Naive thymus-derived CD4-positive, alpha-beta T cell (primary cell): ENCODE measurements at regions of chr10 and their contacts with region 1.

Region 1: DNA sequence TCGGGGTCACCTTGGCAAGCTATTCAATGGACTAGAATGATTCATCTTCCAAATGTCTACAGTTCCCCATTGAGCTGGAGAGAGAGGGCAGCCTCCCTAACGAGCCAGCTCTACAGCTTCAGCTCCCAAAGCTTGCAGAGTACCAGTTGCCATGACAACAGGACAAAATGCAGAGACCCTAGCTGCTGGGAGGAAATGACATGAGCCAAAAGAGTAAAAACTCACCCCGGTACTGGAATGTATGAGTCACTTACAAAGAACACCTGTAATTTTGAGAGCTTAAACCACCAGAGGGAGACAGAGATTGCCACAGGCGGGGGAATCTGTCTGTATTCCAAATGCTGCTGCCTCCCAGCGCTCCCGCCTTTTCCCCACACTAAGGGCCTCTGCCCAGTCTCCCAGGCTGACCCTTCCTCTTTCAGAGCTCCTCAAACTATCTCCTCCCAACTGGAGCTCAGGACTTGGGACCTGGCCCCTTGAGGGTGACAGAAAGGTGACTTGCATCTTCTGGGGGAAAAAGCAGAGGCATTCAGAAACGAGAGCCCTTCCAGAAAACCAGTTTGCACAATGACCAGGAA is 95.5 kb downstream of the CUL2 start:
- DNase-seq: peak in 8 of 9 donors; percentile 18 to 78 (median 50)
- ATAC-seq: peak; percentile 71
- H3K4me3 ChIP-seq: no peak overlapping the region
- H3K4me3 Mint-ChIP-seq: no peak overlapping the region
- H3K27ac ChIP-seq: no peak overlapping the region
- H3K27ac Mint-ChIP-seq: peak overlapping the region in 6 of 9 donors; percentile 28 to 83 (median 56)
- H3K4me1 ChIP-seq: peaks cover 0 to 8% of the 10 kb centered on the region in 2 donors
- H3K4me1 Mint-ChIP-seq: peaks cover 0 to 17% (median 10%) of the 10 kb centered on the region in 7 donors
- H3K27me3 ChIP-seq: no peaks in the 10 kb centered on the region
- H3K27me3 Mint-ChIP-seq: no peaks in the 10 kb centered on the region

Region 2: GRCh38 chr10:35011771-35012191 is 17.1 kb after region 1 on chr10:
- CTCF ChIA-PET with region 1: interaction called, 7 read pairs
- POLR2A ChIA-PET with region 1: interaction called, 5 read pairs
- intact Hi-C with region 1: loop called in 1 of 2 experiments (anchors 1 kb)
- DNase-seq: peak in 7 of 9 donors; percentile 31 to 67 (median 59)
- ATAC-seq: peak; percentile 71
- H3K4me3 ChIP-seq: no peak overlapping the region
- H3K4me3 Mint-ChIP-seq: peak overlapping the region in 9 of 10 donors; percentile 46 to 83 (median 69)
- H3K27ac ChIP-seq: peak overlapping the region; percentile 61
- H3K27ac Mint-ChIP-seq: peak overlapping the region; percentile 39 to 98 (median 94)
- H3K4me1 ChIP-seq: peaks cover 0 to 10% of the 10 kb centered on the region in 2 donors
- H3K4me1 Mint-ChIP-seq: peaks cover 0 to 28% (median 17%) of the 10 kb centered on the region in 7 donors
- H3K27me3 ChIP-seq: no peaks in the 10 kb centered on the region
- H3K27me3 Mint-ChIP-seq: no peaks in the 10 kb centered on the region

Region 3: DNA sequence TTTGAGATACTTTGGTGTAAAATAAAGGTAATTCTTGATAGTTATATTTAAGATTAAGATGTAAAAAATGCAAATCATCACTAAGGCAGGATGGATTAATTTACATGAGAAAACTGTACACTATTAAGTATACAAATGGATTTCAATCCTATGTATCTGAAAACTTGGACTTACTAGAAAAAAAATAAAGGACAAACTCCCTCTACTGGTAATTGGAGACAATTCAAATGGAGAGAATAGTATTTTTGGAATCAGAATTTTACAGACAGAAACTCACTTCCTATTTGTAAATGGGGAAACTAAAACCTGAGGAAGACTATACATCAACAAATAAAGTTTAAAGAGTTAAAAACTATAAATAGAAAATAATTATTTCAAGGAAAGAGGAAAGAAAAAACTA is 32.9 kb after region 1 on chr10:
- CTCF ChIA-PET with region 1: interaction called, 40 read pairs
- POLR2A ChIA-PET with region 1: no interaction called
- intact Hi-C with region 1: loop called (anchors 1 to 2 kb)
- DNase-seq: no peak
- ATAC-seq: no peak
- H3K4me3 ChIP-seq: no peak overlapping the region
- H3K4me3 Mint-ChIP-seq: no peak overlapping the region
- H3K27ac ChIP-seq: no peak overlapping the region
- H3K27ac Mint-ChIP-seq: peak overlapping the region in 3 of 9 donors; percentile 1 to 51 (median 36)
- H3K4me1 ChIP-seq: no peaks in the 10 kb centered on the region
- H3K4me1 Mint-ChIP-seq: no peaks in the 10 kb centered on the region
- H3K27me3 ChIP-seq: no peaks in the 10 kb centered on the region
- H3K27me3 Mint-ChIP-seq: no peaks in the 10 kb centered on the region

Region 4: DNA sequence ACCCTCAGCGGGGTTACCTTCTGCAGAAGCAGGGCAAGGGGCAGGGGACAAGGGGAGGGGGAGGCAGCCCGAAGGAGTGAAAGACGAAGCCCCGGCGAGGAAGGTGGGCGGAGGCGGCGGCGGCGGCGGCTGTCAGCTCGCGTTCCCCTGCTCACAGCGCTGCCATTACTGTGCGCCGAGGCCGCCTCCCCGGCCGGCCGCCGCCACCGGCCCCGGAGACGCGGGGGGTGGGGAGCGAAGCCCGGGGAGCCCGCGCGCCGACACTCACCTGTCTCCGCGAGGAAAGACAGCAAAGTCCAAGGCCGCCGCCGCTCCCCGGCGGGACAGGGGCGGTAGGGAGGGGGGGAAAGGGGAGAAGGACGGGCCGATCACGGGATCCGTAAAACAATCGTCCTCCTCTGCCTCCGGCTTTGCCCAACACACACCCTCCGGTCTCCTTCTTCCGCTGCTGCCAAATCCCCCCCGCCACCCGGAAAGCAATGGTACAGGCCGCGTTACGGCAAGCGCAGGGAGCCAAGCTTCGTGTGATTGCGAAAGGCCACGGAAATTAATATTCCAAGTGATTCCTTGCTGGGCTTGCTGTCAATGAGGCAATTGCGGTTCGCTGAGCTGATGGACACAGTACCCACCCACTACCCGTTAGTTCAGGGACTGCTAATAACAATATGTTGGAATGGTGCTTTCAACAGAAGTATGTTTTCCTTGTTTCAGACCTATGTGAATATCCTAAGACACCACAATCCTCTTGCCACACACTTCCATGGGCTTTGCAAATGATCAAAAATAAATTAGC is 95.7 kb after region 1 on chr10 and contains the start of gene CUL2:
- CTCF ChIA-PET with region 1: no interaction called
- POLR2A ChIA-PET with region 1: no interaction called
- intact Hi-C with region 1: loop called in 1 of 2 experiments (anchors 1 kb)
- DNase-seq: peak; percentile 85 to 98 (median 94)
- ATAC-seq: peak; percentile 96
- H3K4me3 ChIP-seq: peak within 1 kb of the TSS; percentile 65
- H3K4me3 Mint-ChIP-seq: peak within 1 kb of the TSS; percentile 84 to 99 (median 94)
- H3K27ac ChIP-seq: peak within 1 kb of the TSS; percentile 98
- H3K27ac Mint-ChIP-seq: peak within 1 kb of the TSS; percentile 91 to 99 (median 97)
- H3K4me1 ChIP-seq: peaks cover 35 to 41% of the 10 kb centered on the region in 2 donors
- H3K4me1 Mint-ChIP-seq: peaks cover 31 to 55% (median 52%) of the 10 kb centered on the region in 7 donors
- H3K27me3 ChIP-seq: no peaks in the 10 kb centered on the region
- H3K27me3 Mint-ChIP-seq: peaks cover 0 to 8% (median 0%) of the 10 kb centered on the region in 5 donors
- total RNA-seq, gene CUL2: 30.9 to 43.7 (median 36.0) TPM